ENCODE measurements at regions of chr21 and their contacts with region 1.

Region 1: GRCh38 chr21:15768045-15768601 is 38.3 kb downstream of the USP25 start:
- DNase-seq: no peak
- H3K4me3 ChIP-seq: no peak overlapping the region
- CTCF ChIP-seq: no peak
- POLR2A ChIP-seq: no peak

Region 2: GRCh38 chr21:15725934-15726333 is 42.2 kb before region 1 on chr21:
- intact Hi-C with region 1: loop called (anchors 2 kb)
- DNase-seq: no peak
- H3K4me3 ChIP-seq: no peak overlapping the region
- CTCF ChIP-seq: no peak
- POLR2A ChIP-seq: no peak